ENCODE measurements at regions of chr11 and their contacts with region 1.

Region 1: DNA sequence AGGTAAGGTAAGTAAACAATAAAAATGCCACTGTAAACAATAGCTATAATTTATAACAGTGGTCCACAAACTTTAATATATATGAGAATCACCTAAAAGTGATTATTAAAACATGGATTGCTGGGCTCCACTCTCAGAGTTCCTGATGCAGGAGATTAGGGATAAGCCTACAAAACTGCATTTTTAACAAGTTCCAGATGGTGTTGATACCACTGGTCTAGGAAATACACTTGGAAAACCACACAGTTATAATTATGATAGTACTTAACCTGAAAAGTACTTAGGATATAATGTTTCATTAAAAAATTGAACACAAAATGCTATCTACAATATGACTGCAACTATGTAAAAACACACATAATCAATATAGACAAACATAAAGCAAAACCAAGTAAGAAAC is 20.4 kb downstream of the FCHSD2 start:
- DNase-seq: no peak
- ATAC-seq: no peak
- H3K4me3 ChIP-seq: no peak overlapping the region
- H3K27ac ChIP-seq: no peak overlapping the region
- H3K4me1 ChIP-seq: no peaks in the 10 kb centered on the region; the same call in 1 of the 2 replicates
- H3K27me3 ChIP-seq: no peaks in the 10 kb centered on the region
- CTCF ChIP-seq: no peak
- POLR2A ChIP-seq: no peak
- RAD21 ChIP-seq: no peak

Region 2: DNA sequence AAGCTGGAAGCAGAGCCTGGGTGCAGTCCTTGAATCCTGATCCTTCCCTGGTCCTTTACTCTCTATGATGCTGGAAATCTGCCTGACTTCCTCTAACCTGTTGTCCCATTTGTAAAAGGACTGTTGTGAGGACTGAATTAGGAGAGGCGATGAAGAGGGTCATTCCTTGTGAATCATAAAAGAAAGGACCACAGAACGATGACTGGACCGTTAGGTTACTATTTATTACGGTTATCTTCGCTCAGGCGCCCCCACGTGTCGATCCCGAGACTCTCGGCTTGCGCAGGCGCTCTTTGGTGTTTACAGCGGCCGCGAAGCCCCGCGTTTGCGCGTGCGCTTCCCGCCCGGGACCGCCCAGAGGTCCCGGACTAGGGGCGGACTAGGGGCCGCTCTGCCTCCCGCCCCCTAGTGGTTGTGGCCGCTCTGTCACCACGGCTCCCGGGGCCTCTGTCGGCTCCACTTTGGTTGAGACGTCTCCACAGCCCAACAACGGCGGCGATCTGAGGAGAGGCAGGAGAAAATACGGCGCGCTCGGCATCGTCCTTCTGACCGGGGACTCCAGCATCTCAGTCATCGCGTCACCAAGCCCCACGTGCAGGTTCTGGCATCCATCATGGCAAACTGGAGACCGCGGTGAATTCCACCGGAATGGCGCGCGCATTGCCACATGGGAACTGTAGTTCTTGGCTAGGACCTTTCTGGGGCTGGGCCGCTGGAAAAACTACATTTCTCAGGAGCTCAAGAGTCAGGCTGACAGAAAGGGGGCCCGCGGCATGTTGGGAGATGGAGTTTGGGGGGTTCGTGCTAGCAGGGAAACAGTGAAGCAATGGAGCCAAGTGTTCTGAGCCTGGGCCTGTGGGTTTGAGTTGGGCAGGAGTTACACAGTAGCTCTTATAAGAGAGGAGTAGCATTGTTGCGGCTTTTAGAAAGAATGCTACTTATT is 328.0 kb before region 1 on chr11 and contains the start of gene STARD10:
- CTCF ChIA-PET with region 1: no interaction called
- POLR2A ChIA-PET with region 1: interaction called, 14 read pairs
- dilution Hi-C with region 1: no loop called
- in situ Hi-C with region 1: no loop called
- intact Hi-C with region 1: no loop called
- DNase-seq: peak; percentile 94
- ATAC-seq: peak; percentile 97
- H3K4me3 ChIP-seq: peak within 1 kb of the TSS; percentile 68
- H3K27ac ChIP-seq: peak within 1 kb of the TSS; percentile 82
- H3K4me1 ChIP-seq: peaks cover 15% of the 10 kb centered on the region
- H3K27me3 ChIP-seq: no peaks in the 10 kb centered on the region
- CTCF ChIP-seq: peak; percentile 88
- POLR2A ChIP-seq: no peak; the same call in 1 of the 2 replicates
- RAD21 ChIP-seq: peak; percentile 61; the same call in 1 of the 2 replicates
- total RNA-seq, gene STARD10: 22.2 and 23.8 TPM in 2 replicates

Region 3: DNA sequence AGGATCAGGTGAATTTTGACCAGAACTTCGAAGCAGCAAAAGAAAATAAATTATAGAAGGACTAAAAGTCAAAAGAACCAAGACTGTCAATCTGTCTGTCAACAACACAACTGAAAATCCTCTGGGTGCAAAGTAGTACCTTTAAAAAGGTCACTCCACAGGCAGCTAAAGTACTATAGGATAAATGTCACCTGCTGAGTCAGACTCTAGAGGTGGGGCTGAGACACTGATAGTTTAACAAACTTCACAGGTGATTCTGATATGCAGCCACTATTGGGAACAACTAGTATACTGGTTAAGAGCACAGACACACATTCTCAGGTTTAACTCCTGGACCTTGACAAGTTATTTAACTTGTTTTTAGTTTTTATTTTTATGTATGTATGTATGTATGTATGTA is 86.9 kb before region 1 on chr11:
- CTCF ChIA-PET with region 1: no interaction called
- POLR2A ChIA-PET with region 1: no interaction called
- dilution Hi-C with region 1: no loop called
- in situ Hi-C with region 1: no loop called
- intact Hi-C with region 1: loop called (anchors 5 kb)
- DNase-seq: no peak
- ATAC-seq: no peak
- H3K4me3 ChIP-seq: no peak overlapping the region
- H3K27ac ChIP-seq: no peak overlapping the region
- H3K4me1 ChIP-seq: no peaks in the 10 kb centered on the region
- H3K27me3 ChIP-seq: no peaks in the 10 kb centered on the region
- CTCF ChIP-seq: no peak
- POLR2A ChIP-seq: no peak
- RAD21 ChIP-seq: no peak

Region 4: GRCh38 chr11:73072901-73073481 is 48.7 kb before region 1 on chr11:
- CTCF ChIA-PET with region 1: no interaction called
- POLR2A ChIA-PET with region 1: no interaction called
- dilution Hi-C with region 1: no loop called
- in situ Hi-C with region 1: no loop called
- intact Hi-C with region 1: loop called (anchors 5 kb)
- DNase-seq: peak; percentile 12
- ATAC-seq: peak; percentile 65
- H3K4me3 ChIP-seq: no peak overlapping the region
- H3K27ac ChIP-seq: no peak overlapping the region
- H3K4me1 ChIP-seq: no peaks in the 10 kb centered on the region
- H3K27me3 ChIP-seq: no peaks in the 10 kb centered on the region
- CTCF ChIP-seq: no peak
- POLR2A ChIP-seq: no peak
- RAD21 ChIP-seq: no peak

Measured in IMR-90 (cell line).